CD4-positive, alpha-beta memory T cell (primary cell): ENCODE measurements at regions of chr11 and their contacts with region 1.

Region 1: DNA sequence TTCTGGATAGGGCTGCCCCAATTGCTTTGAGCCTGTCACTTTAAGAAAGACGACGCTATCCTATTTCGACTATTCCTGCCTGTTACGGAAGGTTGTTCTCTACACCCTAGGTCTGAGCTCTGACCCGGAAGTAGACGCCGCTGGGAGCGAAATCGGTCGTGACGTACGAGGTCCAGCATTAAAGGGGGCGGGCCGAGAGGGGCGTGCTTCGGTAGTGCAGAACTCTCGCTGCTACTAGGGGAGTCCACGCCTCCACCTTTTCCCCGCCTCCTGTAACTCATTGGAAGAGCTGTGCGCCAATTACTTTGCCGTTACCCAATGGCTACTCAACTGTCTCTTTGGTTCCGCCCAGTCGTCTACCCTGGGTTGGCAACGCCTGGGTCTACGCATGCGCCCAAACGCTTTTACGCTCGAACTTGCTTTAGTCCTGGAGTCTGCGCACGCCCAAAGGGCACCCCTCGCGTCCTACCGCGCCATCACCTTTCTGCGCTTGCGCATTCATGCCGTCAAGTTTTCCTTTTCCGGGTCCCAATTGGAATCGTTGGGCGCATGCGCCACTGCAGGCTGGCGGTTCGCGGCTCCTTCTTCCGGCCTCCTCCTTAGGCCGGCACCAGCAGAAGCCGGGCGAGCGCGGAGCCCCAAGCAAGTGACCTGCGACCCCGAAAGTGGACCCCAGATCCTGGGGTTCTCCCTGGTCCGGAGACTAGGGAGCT is at the start of gene PCNX3:
- DNase-seq: peak; percentile 100
- H3K4me3 ChIP-seq: peak within 1 kb of the TSS; percentile 74 to 96
- H3K4me3 Mint-ChIP-seq: peak within 1 kb of the TSS; percentile 95 to 99 (median 96)
- H3K27ac ChIP-seq: peak within 1 kb of the TSS; percentile 96
- H3K27ac Mint-ChIP-seq: peak within 1 kb of the TSS; percentile 90 to 100 (median 99)
- H3K4me1 ChIP-seq: peaks cover 46% of the 10 kb centered on the region
- H3K4me1 Mint-ChIP-seq: peaks cover 23 to 59% (median 46%) of the 10 kb centered on the region in 4 donors
- H3K27me3 ChIP-seq: no peaks in the 10 kb centered on the region
- H3K27me3 Mint-ChIP-seq: no peaks in the 10 kb centered on the region
- total RNA-seq, gene PCNX3: 63.3 to 66.3 TPM

Region 2: DNA sequence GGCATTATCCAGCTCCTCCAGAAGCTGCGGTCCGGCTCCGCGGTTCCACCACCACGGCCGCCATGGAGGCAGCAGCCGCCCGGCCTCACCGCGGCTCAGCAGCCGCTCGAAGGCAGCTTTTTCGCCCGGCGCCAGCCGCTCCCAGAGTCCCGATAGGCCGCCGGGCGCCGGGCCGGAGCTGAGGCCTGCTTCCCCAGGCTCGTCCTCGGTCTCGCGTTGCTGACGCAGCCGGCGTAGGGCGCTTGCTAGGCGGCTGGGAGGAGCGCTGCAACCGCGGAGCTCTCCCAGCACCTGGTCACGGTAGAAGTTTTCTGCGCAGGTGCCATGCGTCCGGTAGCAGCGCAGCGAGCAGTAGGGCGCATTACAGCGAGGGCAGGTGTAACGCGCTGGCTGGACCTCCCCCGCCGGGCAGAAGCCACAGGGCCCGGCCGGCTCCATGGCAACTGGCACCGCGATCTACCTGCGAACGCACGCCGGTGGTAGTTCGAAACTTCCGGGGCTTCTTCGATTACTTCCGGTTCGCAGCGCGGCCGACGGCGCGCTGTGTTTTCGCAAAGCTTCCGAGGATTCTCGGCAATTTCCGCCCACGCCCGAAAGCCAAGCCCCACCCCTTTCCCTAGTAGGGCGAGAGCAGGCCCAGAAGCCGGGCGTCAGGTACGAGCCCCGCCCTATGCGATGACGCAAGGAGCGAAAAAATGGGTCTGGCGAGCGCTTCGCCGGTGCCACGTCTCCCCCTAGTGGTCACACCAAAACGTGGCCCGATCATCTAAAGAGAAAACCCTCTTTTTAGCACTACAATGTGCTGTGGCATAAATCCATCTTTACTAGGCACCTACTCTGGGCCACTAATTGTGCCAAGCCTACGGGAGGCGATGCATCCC is 497.9 kb before region 1 on chr11 and contains the start of gene ZNHIT2:
- CTCF ChIA-PET with region 1: no interaction called
- POLR2A ChIA-PET with region 1: interaction called, 5 read pairs
- intact Hi-C with region 1: loop called (anchors 1 kb)
- DNase-seq: peak; percentile 100
- H3K4me3 ChIP-seq: peak within 1 kb of the TSS; percentile 69 to 82
- H3K4me3 Mint-ChIP-seq: peak within 1 kb of the TSS; percentile 88 to 94 (median 92)
- H3K27ac ChIP-seq: peak within 1 kb of the TSS; percentile 91
- H3K27ac Mint-ChIP-seq: peak within 1 kb of the TSS; percentile 95 to 99 (median 97)
- H3K4me1 ChIP-seq: peaks cover 40% of the 10 kb centered on the region
- H3K4me1 Mint-ChIP-seq: peaks cover 17 to 69% (median 42%) of the 10 kb centered on the region in 4 donors
- H3K27me3 ChIP-seq: no peaks in the 10 kb centered on the region
- H3K27me3 Mint-ChIP-seq: no peaks in the 10 kb centered on the region
- total RNA-seq, gene ZNHIT2: 15.9 to 16.5 TPM

Region 3: DNA sequence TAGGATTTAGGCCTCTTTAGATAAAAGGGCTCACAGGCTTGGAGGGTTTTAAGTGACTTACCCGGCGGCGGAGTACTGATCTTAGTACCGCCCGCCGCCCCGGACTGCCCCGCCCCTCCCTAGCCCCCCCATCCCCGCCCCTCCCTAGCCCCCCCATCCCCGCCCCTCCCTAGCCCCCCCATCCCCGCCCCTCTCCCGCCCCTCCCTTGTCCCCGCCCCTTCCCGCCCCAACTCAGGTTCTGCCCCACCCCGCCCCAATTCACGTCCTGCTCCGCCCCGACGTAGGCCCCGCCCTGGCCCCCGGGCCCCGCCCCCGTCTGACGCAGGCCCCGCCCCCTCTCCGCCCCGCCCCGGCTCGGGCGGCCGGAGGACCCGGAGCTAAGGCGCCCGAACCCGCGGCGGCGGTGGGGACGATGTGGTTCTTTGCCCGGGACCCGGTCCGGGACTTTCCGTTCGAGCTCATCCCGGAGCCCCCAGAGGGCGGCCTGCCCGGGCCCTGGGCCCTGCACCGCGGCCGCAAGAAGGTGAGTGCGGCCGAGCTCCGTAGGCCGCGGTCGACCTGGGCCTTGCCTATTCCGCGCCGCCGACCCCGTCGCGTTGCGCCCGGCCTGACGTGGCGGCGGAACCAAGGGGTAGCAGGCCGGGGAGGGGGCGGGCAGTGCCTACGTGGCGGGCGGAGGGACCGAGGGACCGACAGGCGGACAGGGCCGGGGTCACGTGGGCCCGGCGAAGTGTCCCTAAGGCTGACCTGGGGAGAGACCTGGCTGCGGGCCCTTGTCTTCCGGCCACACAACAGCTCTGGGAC is 90.4 kb before region 1 on chr11 and contains the start of gene SCYL1:
- CTCF ChIA-PET with region 1: no interaction called
- POLR2A ChIA-PET with region 1: interaction called, 24 read pairs
- intact Hi-C with region 1: no loop called
- DNase-seq: peak; percentile 72 to 82 (median 75)
- H3K4me3 ChIP-seq: peak within 1 kb of the TSS; percentile 78 to 83
- H3K4me3 Mint-ChIP-seq: peak within 1 kb of the TSS; percentile 81 to 92 (median 88)
- H3K27ac ChIP-seq: peak within 1 kb of the TSS; percentile 84
- H3K27ac Mint-ChIP-seq: peak within 1 kb of the TSS; percentile 81 to 98 (median 94)
- H3K4me1 ChIP-seq: peaks cover 54% of the 10 kb centered on the region
- H3K4me1 Mint-ChIP-seq: peaks cover 35 to 63% (median 49%) of the 10 kb centered on the region in 4 donors
- H3K27me3 ChIP-seq: no peaks in the 10 kb centered on the region
- H3K27me3 Mint-ChIP-seq: no peaks in the 10 kb centered on the region
- total RNA-seq, gene SCYL1: 72.5 to 81.3 TPM

Region 4: GRCh38 chr11:65593518-65594298 is 21.7 kb before region 1 on chr11:
- CTCF ChIA-PET with region 1: interaction called, 13 read pairs
- POLR2A ChIA-PET with region 1: interaction called, 19 read pairs
- intact Hi-C with region 1: no loop called
- DNase-seq: peak in 4 of 5 donors; percentile 26 to 34 (median 28)
- H3K4me3 ChIP-seq: no peak overlapping the region
- H3K4me3 Mint-ChIP-seq: no peak overlapping the region
- H3K27ac ChIP-seq: no peak overlapping the region
- H3K27ac Mint-ChIP-seq: peak overlapping the region in 2 of 7 donors; percentile 10 to 42
- H3K4me1 ChIP-seq: peaks cover 30% of the 10 kb centered on the region
- H3K4me1 Mint-ChIP-seq: peaks cover 7 to 36% (median 12%) of the 10 kb centered on the region in 4 donors
- H3K27me3 ChIP-seq: no peaks in the 10 kb centered on the region
- H3K27me3 Mint-ChIP-seq: no peaks in the 10 kb centered on the region

Region 5: GRCh38 chr11:65662799-65663638 is 47.6 kb after region 1 on chr11 and contains the start of gene RELA:
- CTCF ChIA-PET with region 1: interaction called, 6 read pairs
- POLR2A ChIA-PET with region 1: interaction called, 99 read pairs
- intact Hi-C with region 1: loop called (anchors 1 kb)
- DNase-seq: peak; percentile 87 to 95 (median 91)
- H3K4me3 ChIP-seq: peak within 1 kb of the TSS; percentile 96 to 97
- H3K4me3 Mint-ChIP-seq: peak within 1 kb of the TSS; percentile 89 to 95 (median 90)
- H3K27ac ChIP-seq: peak within 1 kb of the TSS; percentile 98
- H3K27ac Mint-ChIP-seq: peak within 1 kb of the TSS; percentile 96 to 98 (median 96)
- H3K4me1 ChIP-seq: peaks cover 38% of the 10 kb centered on the region
- H3K4me1 Mint-ChIP-seq: peaks cover 20 to 45% (median 33%) of the 10 kb centered on the region in 4 donors
- H3K27me3 ChIP-seq: no peaks in the 10 kb centered on the region
- H3K27me3 Mint-ChIP-seq: no peaks in the 10 kb centered on the region
- total RNA-seq, gene RELA: 170 to 173 TPM

Region 6: DNA sequence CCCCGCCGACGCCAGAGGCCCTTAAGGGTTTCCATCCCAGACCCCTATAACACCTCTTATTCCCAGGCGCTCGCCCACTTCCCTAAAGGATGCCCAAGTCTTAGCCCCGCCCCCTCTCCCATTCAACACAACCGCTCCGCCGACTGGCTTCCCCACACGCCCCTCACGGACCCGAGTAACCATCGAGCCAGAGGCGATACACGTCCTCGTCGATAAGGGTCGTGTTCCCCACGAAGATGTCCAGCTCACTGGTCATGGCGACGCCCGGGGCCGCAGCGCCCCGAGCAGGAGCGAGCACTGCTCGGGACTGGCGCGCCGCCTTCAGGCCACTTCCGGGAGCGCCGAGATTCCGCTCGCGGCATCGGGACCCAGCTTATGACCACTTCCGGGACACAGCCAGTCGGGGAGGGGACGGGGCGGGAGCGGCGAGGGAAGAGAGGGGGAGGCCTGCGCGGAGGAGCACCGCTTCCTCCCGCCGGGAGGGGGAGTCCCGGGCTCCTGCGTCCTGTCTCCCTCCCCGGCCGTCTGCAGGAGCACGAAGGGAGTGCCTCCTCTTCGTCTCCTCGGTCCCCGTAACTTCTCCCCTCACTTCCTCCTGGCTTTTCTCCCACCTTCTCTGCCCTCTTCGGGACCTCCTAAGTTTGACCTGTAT is 272.9 kb after region 1 on chr11 and contains the start of gene FIBP:
- CTCF ChIA-PET with region 1: interaction called, 4 read pairs
- POLR2A ChIA-PET with region 1: interaction called, 26 read pairs
- intact Hi-C with region 1: no loop called
- DNase-seq: peak; percentile 90 to 97 (median 91)
- H3K4me3 ChIP-seq: peak within 1 kb of the TSS; percentile 79 to 83
- H3K4me3 Mint-ChIP-seq: peak within 1 kb of the TSS; percentile 86 to 97 (median 91)
- H3K27ac ChIP-seq: peak within 1 kb of the TSS; percentile 86
- H3K27ac Mint-ChIP-seq: peak within 1 kb of the TSS; percentile 95 to 100 (median 99)
- H3K4me1 ChIP-seq: peaks cover 63% of the 10 kb centered on the region
- H3K4me1 Mint-ChIP-seq: peaks cover 34 to 73% (median 56%) of the 10 kb centered on the region in 4 donors
- H3K27me3 ChIP-seq: no peaks in the 10 kb centered on the region
- H3K27me3 Mint-ChIP-seq: no peaks in the 10 kb centered on the region
- total RNA-seq, gene FIBP: 39.9 to 42.1 TPM